Activated CD4-positive, alpha-beta memory T cell treated with anti-CD3 and anti-CD28 coated beads, Interleukin-2, amount 10 ng/mL, durations not matched to agents 7 days and 5 days (primary cell): ENCODE measurements at regions of chr1 and their contacts with region 1.

Region 1: GRCh38 chr1:117605774-117606648 is at the start of gene TENT5C:
- DNase-seq: peak; percentile 99
- H3K4me3 Mint-ChIP-seq: peak within 1 kb of the TSS; percentile 97
- H3K27ac Mint-ChIP-seq: peak within 1 kb of the TSS; percentile 95
- H3K4me1 Mint-ChIP-seq: peaks cover 46% of the 10 kb centered on the region
- H3K27me3 Mint-ChIP-seq: peaks cover 17% of the 10 kb centered on the region
- total RNA-seq, gene TENT5C: 64.5 to 66.1 TPM

Region 2: DNA sequence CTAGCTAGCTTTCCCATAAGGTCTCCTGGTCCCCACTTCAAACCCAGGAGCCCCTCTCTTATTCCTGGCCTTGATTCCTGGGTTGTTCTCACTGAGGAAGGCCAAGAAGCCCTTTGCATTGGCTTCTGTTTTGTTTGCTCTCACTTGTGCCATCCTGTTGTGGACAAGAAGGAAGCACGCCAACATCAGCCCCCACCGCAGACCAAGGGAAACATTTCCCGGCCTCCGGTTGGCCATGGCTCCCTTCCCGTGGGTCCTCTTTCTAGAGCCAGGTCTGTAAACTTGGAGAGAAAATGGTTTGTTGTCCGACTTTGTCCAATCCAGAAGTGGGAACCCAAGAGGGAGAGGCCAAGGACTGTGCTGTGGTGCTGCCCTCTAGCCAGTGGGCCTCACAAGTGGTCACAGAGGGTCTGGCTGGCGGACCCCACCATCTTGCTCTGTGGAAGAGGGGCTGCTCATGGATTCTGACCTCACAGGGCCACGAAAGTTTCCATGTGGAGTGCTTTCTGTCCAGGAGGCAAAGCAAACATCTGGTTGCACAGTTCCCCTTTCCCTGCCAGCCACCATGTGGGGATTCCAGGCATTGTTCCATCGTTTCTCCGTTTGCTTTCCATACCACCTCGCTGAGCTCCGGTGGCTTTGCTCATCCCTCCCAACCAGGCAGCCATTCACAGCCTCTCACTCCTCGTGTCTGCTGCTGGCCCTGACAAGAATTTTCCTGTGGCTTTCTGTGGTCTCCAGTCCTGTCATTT is 19.1 kb before region 1 on chr1:
- CTCF ChIA-PET with region 1: no interaction called
- POLR2A ChIA-PET with region 1: no interaction called
- DNase-seq: no peak
- H3K4me3 Mint-ChIP-seq: no peak overlapping the region
- H3K27ac Mint-ChIP-seq: no peak overlapping the region
- H3K4me1 Mint-ChIP-seq: no peaks in the 10 kb centered on the region
- H3K27me3 Mint-ChIP-seq: no peaks in the 10 kb centered on the region

Region 3: GRCh38 chr1:117632269-117633067 is 26.5 kb after region 1 on chr1:
- CTCF ChIA-PET with region 1: interaction called, 3 read pairs
- POLR2A ChIA-PET with region 1: interaction called, 33 read pairs
- DNase-seq: no peak
- H3K4me3 Mint-ChIP-seq: no peak overlapping the region
- H3K27ac Mint-ChIP-seq: peak overlapping the region; percentile 67
- H3K4me1 Mint-ChIP-seq: peaks cover 65% of the 10 kb centered on the region
- H3K27me3 Mint-ChIP-seq: no peaks in the 10 kb centered on the region

Region 4: DNA sequence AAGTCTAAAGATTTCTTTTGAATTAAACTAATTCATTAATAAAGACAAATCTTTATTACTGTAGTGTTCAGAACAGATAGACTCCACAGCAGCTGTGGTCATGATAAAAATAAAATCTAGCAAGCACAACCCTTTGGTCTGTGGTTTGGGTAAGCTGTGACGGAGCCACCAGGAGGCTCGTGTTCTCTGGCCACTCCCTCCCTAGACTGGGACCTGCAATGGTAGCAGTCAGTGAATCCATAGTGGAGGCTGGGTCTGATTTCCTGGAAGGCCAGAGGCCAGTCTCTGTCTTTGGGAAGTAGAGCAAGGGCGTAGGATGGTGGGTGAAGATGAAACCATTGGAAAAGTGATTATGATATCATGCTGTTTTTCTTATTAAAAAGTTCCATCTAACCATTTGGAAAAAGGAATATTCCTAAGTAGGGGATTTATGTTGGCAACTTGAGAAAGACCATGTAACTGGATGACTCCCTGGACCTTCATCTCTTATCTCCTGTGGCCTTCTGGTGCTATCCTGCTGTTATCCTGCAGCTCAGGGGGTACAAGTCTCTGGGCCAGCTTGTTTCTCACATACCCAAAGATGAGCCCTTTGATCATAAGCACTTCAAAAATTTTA is 38.8 kb after region 1 on chr1:
- CTCF ChIA-PET with region 1: interaction called, 4 read pairs
- POLR2A ChIA-PET with region 1: interaction called, 512 read pairs
- DNase-seq: peak; percentile 41
- H3K4me3 Mint-ChIP-seq: no peak overlapping the region
- H3K27ac Mint-ChIP-seq: no peak overlapping the region
- H3K4me1 Mint-ChIP-seq: peaks cover 18% of the 10 kb centered on the region
- H3K27me3 Mint-ChIP-seq: peaks cover 3% of the 10 kb centered on the region

Region 5: GRCh38 chr1:117654493-117655219 is 48.6 kb after region 1 on chr1:
- CTCF ChIA-PET with region 1: interaction called, 66 read pairs
- POLR2A ChIA-PET with region 1: interaction called, 512 read pairs
- DNase-seq: no peak
- H3K4me3 Mint-ChIP-seq: peak overlapping the region; percentile 29
- H3K27ac Mint-ChIP-seq: peak overlapping the region; percentile 91
- H3K4me1 Mint-ChIP-seq: peaks cover 86% of the 10 kb centered on the region
- H3K27me3 Mint-ChIP-seq: no peaks in the 10 kb centered on the region